Transverse colon (tissue), 4 donors: ENCODE measurements at regions of chr14 and their contacts with region 1.

Region 1: DNA sequence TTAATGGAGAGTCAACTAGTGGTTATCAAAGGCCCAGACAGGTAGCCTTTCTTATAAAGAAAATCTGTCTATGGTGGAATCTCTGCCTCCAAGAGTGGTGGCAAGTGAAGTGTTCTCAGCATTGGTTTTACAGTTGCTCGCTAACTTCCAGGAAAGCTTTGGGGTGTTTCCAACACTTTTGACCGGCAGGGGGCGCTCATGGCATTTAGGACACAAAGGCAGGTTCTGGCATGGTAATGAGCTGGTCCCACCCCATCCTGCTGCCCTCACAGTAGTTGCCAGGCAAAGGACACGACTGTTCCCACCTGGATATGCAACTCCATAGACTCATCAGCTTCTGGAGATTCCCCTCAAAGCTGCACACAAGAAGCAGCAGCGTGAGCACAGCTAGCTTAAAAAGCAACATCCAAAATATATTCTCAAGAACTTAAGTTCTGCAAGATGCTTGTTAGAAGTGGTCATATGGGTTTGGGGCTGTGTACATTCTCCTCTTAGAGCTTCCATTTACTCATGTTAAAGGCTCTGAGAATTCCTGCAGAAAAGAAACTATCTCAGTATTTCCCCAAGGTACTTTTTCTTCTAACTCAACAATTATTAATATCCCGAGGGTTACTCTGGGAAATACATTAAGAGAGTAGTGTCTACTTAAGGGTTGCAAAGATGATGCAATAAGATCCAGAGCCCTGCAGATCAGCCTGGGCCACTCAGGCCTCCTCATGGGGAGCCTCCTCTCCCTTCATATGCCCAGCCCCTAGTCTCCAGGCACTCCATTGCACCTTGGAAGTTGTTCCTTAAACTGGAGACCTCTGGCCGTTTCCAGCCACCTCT is 14.8 kb downstream of the PROX2 start:
- DNase-seq: peak; percentile 93
- H3K4me3 ChIP-seq: no peak overlapping the region
- H3K27ac ChIP-seq: no peak overlapping the region
- H3K4me1 ChIP-seq: peaks cover 0 to 7% (median 0%) of the 10 kb centered on the region in 4 donors
- H3K27me3 ChIP-seq: no peaks in the 10 kb centered on the region
- CTCF ChIP-seq: peak; percentile 74 to 93 (median 91)
- EP300 ChIP-seq: no peak
- POLR2A ChIP-seq: no peak

Region 2: GRCh38 chr14:74905375-74906142 is 44.4 kb after region 1 on chr14:
- in situ Hi-C with region 1: loop called in 1 of 4 experiments (anchors 10 kb)
- intact Hi-C with region 1: loop called (anchors 5 kb)
- DNase-seq: peak; percentile 77
- H3K4me3 ChIP-seq: no peak overlapping the region
- H3K27ac ChIP-seq: peak overlapping the region in 1 of 4 donors; percentile 11
- H3K4me1 ChIP-seq: peaks cover 6 to 16% (median 11%) of the 10 kb centered on the region in 4 donors
- H3K27me3 ChIP-seq: no peaks in the 10 kb centered on the region
- CTCF ChIP-seq: peak; percentile 92 to 94 (median 93)
- EP300 ChIP-seq: no peak
- POLR2A ChIP-seq: no peak

Region 3: DNA sequence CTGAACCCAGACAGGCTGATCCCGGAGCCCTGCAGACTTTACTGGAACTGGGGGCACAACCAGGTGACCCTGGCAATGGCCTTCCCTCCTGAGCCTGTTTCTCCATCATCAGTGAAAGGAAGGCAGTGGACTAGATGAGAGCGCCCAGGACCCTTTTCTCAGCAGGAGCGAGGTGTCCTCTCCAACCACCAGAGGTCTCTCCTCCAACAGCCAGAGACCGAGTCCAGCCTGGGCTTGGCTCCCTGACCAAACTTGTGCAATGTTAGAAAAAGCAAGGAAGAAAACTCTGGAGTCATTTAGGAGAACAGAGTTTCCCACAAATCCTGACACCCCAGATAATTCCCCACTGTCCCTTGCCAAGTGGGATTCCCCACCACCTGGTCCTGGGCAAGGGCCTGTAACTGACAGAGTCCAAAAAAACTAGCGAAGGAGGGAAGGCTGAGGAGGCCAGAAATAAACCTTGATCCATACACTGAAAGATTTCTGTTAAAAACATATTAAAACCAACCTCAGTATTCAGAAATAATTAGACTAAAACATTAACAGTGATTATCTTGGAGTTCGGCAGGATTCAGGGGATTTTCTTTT is 53.0 kb after region 1 on chr14:
- in situ Hi-C with region 1: loop called in 1 of 4 experiments (anchors 10 kb)
- intact Hi-C with region 1: loop called (anchors 5 kb)
- DNase-seq: peak; percentile 62
- H3K4me3 ChIP-seq: no peak overlapping the region
- H3K27ac ChIP-seq: peak overlapping the region in 3 of 4 donors; percentile 30 to 60 (median 38)
- H3K4me1 ChIP-seq: peaks cover 0 to 14% (median 0%) of the 10 kb centered on the region in 4 donors
- H3K27me3 ChIP-seq: no peaks in the 10 kb centered on the region
- CTCF ChIP-seq: peak; percentile 47 to 56 (median 55)
- EP300 ChIP-seq: no peak
- POLR2A ChIP-seq: no peak